ENCODE measurements at regions of chr17 and their contacts with region 1.

Region 1: DNA sequence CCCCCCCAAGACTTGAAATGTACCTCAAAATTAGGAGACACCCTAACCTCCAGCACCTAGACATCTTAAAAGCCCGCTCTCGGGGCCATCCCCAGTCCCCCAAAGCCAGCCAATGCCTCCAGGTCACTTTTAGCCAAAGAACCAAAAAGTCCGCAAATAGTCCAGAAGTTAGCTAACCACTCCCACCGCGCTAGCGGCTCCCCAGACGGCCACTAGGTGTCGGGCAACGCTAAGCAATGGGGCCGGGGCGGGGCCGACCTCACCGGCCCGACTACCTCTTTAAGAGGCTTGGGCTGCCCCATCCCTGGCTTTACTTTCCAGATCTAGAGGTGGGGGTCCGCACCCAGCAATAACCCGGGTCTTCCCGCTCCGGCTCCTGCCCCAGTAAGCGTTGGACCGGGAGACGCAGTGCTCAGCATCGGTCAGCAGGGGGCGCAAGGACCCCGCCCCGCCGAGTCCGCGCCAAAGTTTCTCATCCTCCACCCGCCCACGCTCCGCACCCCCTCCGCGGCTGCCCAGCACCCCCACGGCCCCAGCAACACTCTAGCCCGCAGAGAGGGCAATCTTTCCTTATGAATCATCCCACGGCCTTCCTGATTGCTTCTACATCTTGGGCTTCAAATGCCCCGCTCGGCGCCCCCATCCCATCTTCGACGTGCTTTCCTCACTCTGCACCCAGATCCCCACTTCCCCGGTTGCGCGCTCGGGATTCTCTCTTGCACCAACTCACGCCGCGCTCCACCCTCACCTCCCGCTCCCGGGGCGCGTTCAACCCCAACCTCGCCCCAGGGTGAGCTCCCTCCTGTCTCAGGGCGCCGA is 765 bp downstream of the COL1A1 start:
- DNase-seq: peak; percentile 96 to 97
- H3K4me3 ChIP-seq: peak overlapping the region; percentile 75 to 96
- H3K27ac ChIP-seq: peak overlapping the region; percentile 96 to 98
- H3K4me1 ChIP-seq: peaks cover 23 to 46% of the 10 kb centered on the region in 2 donors
- H3K27me3 ChIP-seq: no peaks in the 10 kb centered on the region
- CTCF ChIP-seq: peak; percentile 99 to 100 (median 100)
- POLR2A ChIP-seq: peak in 1 of 2 donors; percentile 57

Region 2: DNA sequence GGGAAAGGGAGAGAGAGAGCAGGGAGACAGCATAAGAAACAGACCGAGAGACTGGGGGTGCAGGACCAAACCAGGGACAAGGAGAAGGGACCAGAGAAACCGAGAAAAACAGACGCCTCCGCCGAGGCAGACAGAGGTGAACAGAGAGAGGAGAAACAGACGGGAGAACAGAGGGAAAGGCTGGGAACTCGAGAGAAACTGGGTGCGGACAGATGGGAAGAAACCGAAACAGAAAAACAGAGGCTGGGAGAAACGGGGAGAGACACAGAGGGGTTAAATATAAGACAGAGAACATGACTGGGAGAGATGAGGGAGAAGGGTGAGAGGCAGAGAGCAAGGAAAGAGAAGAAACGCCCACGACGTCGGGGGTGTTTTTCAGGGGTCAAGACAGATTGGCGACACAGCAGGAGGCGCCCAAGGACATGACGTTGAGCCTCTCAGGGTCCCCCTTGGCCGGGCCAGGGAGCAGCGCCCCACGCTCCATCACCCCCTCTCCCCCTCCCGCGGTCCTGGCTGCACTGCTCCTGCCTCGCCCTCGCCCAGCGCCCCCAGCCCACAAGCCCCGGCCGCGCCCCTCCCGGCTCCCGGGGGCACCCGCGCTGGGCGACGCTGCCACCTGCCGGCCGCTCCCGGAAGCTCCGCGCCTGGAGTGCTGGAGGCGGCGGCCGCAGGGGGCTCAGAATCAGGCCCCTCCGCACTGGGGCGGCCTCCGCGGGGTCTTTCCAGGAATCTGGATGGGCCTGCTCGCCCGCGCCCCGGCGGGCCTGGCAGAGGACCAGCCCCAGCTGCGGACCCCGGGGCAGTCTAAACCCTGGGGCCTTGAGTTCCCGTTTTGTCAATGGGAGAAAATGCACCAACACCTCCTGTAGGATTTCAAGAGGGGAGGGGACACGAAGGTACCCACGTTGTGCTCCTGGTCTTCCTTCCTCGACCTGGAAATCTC is 72.3 kb after region 1 on chr17:
- intact Hi-C with region 1: loop called (anchors 2 kb)
- DNase-seq: peak; percentile 65 to 75
- H3K4me3 ChIP-seq: peak overlapping the region; percentile 38 to 61
- H3K27ac ChIP-seq: peak overlapping the region; percentile 92 to 93
- H3K4me1 ChIP-seq: peaks cover 7 to 15% of the 10 kb centered on the region in 2 donors
- H3K27me3 ChIP-seq: no peaks in the 10 kb centered on the region
- CTCF ChIP-seq: peak; percentile 85 to 99 (median 98)
- POLR2A ChIP-seq: peak in 1 of 2 donors; percentile 39

Measured in uterus (tissue), 4 donors.